ENCODE measurements at regions of chr15 and their contacts with region 1.

Region 1: GRCh38 chr15:66386204-66387123 is at the start of gene MAP2K1:
- DNase-seq: peak; percentile 97 to 98
- H3K4me3 ChIP-seq: peak within 1 kb of the TSS; percentile 85
- H3K4me3 Mint-ChIP-seq: peak within 1 kb of the TSS; percentile 91
- H3K27ac Mint-ChIP-seq: peak within 1 kb of the TSS; percentile 98
- H3K4me1 ChIP-seq: no peaks in the 10 kb centered on the region
- H3K4me1 Mint-ChIP-seq: peaks cover 4% of the 10 kb centered on the region
- H3K27me3 ChIP-seq: no peaks in the 10 kb centered on the region
- H3K27me3 Mint-ChIP-seq: no peaks in the 10 kb centered on the region
- CTCF ChIP-seq: peak; percentile 28 to 84
- total RNA-seq, gene MAP2K1: 63.7 and 64.1 TPM in 2 replicates

Region 2: GRCh38 chr15:66356345-66357236 is 29.9 kb before region 1 on chr15 and contains the start of gene TIPIN:
- CTCF ChIA-PET with region 1: interaction called, 5 read pairs
- POLR2A ChIA-PET with region 1: interaction called, 6 read pairs
- intact Hi-C with region 1: loop called (anchors 2 kb)
- DNase-seq: peak; percentile 96
- H3K4me3 ChIP-seq: peak within 1 kb of the TSS; percentile 97
- H3K4me3 Mint-ChIP-seq: peak within 1 kb of the TSS; percentile 95
- H3K27ac Mint-ChIP-seq: peak within 1 kb of the TSS; percentile 99
- H3K4me1 ChIP-seq: 0 out of 2 replicates have a peak, but pooled peaks cover 5% of the 10 kb centered on the region
- H3K4me1 Mint-ChIP-seq: peaks cover 9% of the 10 kb centered on the region
- H3K27me3 ChIP-seq: no peaks in the 10 kb centered on the region
- H3K27me3 Mint-ChIP-seq: no peaks in the 10 kb centered on the region
- CTCF ChIP-seq: no peak
- total RNA-seq, gene TIPIN: 22.8 and 28.0 TPM in 2 replicates

Region 3: DNA sequence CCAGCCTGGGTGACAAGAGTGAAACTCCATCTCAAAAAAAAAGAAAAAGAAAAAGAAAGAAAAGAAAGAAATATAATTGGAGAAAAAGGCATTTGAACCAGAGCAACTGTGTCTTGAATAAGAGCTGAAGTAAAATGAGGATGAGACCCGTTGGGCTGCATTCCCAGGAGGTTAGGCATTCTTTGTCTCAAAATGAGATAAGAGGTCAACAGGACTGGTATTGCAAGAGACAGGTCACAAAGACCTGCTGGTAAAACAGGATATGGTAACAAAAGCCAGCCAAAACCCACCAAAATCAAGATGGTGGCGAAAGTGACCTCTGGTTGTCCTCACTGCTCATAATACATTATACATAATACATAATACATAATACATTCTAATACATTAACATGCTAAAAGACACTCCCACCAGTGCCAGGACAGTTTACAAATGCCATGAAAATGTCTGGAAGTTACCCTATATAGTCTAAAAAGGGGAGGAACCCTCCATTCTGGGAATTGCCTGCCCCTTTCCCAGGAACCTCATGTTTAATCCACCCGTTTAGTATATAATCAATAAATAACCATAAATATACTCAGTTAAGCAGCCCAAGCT is 21.4 kb before region 1 on chr15:
- CTCF ChIA-PET with region 1: interaction called, 3 read pairs
- POLR2A ChIA-PET with region 1: interaction called, 4 read pairs
- intact Hi-C with region 1: loop called (anchors 1 kb)
- DNase-seq: peak; percentile 80 to 86
- H3K4me3 ChIP-seq: no peak overlapping the region
- H3K4me3 Mint-ChIP-seq: no peak overlapping the region
- H3K27ac Mint-ChIP-seq: peak overlapping the region; percentile 86
- H3K4me1 ChIP-seq: peaks cover 19% of the 10 kb centered on the region
- H3K4me1 Mint-ChIP-seq: peaks cover 10% of the 10 kb centered on the region
- H3K27me3 ChIP-seq: no peaks in the 10 kb centered on the region
- H3K27me3 Mint-ChIP-seq: no peaks in the 10 kb centered on the region
- CTCF ChIP-seq: no peak

Region 4: DNA sequence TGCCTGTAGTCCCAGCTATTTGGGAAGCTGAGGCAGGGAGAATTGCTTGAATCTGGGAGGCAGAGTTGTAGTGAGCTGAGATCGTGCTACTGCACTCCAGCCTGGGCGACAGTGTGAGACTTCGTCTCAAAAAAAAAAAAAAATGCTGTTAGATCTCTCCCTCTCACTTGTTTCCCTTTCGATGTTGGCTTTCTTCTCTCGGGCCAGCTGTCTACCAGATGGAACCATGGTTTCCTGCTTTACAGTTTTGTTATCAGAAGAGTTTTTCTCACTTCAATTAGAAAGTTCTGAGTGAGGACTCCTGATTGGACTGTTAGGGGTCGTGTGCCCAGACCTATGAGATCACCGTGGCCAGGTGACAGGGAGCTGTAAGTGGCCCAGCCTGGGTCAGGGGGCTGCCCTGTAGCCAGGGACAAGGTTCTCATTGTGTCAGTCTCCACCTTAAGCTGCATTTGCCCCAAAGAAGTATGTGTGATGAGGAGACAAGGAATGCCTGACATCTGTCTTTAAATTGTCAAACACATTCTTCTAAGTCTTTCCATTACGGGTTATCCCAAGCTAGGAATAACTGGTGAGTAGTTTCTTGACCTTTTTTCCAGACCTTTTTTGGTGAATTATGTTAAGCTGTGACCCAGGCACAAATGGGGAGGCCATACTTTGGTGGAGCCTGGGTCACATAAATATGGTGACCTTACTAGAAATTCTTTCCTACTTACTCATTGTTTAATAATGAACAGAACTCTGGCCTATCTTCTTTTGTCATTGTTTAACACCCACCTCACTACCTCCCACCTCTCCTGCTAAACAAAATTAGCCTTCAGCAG is 85.9 kb after region 1 on chr15:
- CTCF ChIA-PET with region 1: no interaction called
- POLR2A ChIA-PET with region 1: interaction called, 3 read pairs
- intact Hi-C with region 1: loop called (anchors 5 kb)
- DNase-seq: peak; percentile 54 to 73
- H3K4me3 ChIP-seq: no peak overlapping the region
- H3K4me3 Mint-ChIP-seq: peak overlapping the region; percentile 19
- H3K27ac Mint-ChIP-seq: peak overlapping the region; percentile 33
- H3K4me1 ChIP-seq: peaks cover 36% of the 10 kb centered on the region
- H3K4me1 Mint-ChIP-seq: peaks cover 24% of the 10 kb centered on the region
- H3K27me3 ChIP-seq: no peaks in the 10 kb centered on the region
- H3K27me3 Mint-ChIP-seq: no peaks in the 10 kb centered on the region
- CTCF ChIP-seq: no peak

Region 5: DNA sequence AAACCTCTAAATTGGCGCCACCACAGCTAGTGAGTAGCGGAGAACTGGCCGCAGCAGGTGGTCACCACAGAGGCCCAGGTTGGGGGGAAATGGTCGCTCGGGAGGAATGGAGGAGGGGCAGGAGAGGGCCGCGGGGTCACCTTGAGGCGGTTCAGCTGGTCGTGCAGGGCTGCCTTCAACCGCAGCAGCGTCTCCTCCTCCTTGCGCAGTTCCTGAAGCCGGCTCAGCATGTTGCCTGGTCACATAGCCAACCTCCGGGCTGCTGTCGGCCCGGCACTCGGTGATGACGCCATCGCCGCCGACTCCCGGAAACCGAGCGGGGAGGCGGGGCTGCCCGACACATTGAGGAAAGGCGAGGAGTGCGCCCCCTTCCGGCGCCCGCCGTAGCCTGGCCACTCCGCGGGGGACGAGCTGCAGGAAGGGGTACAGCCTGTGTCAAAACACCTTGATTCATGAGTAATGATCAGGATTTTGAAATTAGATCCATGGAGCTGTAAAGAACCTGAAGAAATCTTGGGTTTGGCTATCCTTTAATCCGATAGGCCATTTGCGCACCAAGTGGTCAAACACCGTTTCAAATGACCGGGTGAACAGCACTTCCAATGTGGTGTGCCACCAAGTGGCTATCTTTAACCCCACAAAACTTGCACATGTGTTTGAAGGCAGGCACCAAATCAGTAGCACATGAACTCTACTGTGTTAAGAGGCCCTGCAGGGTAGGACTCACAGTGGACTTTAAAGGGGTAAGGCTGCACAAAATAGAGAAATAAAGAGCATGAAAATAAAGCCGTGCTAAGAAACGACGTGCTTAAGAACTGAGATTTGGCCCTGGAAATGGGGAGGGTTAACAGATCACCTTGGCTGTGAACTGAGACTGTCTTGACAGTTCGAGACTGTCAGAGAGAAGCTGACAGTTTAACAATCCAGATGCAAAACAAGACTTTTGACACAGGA is 111.3 kb after region 1 on chr15 and contains the start of gene SNAPC5:
- CTCF ChIA-PET with region 1: interaction called, 18 read pairs
- POLR2A ChIA-PET with region 1: interaction called, 10 read pairs
- intact Hi-C with region 1: loop called (anchors 2 kb)
- DNase-seq: peak; percentile 95 to 97
- H3K4me3 ChIP-seq: peak within 1 kb of the TSS; percentile 66
- H3K4me3 Mint-ChIP-seq: peak within 1 kb of the TSS; percentile 92
- H3K27ac Mint-ChIP-seq: peak within 1 kb of the TSS; percentile 93
- H3K4me1 ChIP-seq: peaks cover 4% of the 10 kb centered on the region; the same call in 1 of the 2 replicates
- H3K4me1 Mint-ChIP-seq: peaks cover 10% of the 10 kb centered on the region
- H3K27me3 ChIP-seq: no peaks in the 10 kb centered on the region
- H3K27me3 Mint-ChIP-seq: no peaks in the 10 kb centered on the region
- CTCF ChIP-seq: peak; percentile 88 to 96
- total RNA-seq, gene SNAPC5: 28.1 and 31.4 TPM in 2 replicates